Activated T-helper 2 cell treated with anti-CD3 and anti-CD28 coated beads, Interferon-gamma antibody, Interleukin-2, Interleukin-4, amounts not matched to agents 10 μg/mL and 5 μg/mL and 100 μg/mL, durations not matched to agents 14 hours and 24 hours and 36 hours (primary cell): ENCODE measurements at regions of chr1 and their contacts with region 1.

Region 1: DNA sequence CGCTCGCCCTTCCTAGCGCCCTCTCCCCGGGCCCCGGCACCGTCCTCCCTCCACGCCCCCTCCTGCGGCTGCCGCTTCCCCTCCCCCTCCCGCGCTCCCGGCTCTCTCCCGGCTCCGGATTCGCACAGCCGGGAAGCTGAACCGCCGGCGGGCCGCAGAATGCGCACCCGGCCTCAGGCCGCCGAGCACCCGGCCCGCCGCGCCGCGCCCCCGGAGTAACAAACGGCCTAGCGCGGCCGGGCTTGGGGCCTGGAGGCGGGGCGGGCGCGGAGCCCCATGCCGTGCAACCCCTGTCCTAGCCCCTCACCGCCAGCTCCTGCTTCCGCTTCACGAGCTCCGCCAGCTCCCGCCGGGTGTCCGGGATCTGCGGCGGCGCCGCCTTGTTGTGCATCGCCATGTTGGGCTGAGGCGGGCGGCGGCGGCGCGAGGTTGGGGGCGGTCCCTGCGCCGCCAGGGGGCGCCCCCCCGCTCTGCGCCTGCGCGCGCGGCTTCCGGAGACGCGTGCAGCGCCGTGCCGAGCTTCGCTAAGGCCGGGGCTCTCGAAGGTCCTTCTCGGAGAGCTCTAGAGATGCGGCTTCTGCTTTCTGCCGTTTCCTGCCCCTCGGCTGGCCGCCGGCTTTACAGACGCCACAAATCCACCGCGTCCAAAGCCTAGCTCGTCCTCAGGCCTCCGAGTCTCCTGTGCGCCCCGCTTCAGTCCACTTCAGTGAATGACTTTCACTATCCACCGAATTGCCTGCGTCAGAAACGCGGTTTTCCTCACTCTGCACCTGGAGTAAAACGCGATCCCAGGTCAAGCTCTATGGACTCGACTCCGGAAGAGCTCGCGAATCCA is at the start of gene MEAF6:
- DNase-seq: peak; percentile 81
- H3K4me3 Mint-ChIP-seq: peak within 1 kb of the TSS; percentile 93
- H3K27ac Mint-ChIP-seq: peak within 1 kb of the TSS; percentile 95
- H3K4me1 Mint-ChIP-seq: peaks cover 34% of the 10 kb centered on the region
- H3K27me3 Mint-ChIP-seq: no peaks in the 10 kb centered on the region
- total RNA-seq, gene MEAF6: 87.9 and 93.0 TPM in 2 replicates

Region 2: DNA sequence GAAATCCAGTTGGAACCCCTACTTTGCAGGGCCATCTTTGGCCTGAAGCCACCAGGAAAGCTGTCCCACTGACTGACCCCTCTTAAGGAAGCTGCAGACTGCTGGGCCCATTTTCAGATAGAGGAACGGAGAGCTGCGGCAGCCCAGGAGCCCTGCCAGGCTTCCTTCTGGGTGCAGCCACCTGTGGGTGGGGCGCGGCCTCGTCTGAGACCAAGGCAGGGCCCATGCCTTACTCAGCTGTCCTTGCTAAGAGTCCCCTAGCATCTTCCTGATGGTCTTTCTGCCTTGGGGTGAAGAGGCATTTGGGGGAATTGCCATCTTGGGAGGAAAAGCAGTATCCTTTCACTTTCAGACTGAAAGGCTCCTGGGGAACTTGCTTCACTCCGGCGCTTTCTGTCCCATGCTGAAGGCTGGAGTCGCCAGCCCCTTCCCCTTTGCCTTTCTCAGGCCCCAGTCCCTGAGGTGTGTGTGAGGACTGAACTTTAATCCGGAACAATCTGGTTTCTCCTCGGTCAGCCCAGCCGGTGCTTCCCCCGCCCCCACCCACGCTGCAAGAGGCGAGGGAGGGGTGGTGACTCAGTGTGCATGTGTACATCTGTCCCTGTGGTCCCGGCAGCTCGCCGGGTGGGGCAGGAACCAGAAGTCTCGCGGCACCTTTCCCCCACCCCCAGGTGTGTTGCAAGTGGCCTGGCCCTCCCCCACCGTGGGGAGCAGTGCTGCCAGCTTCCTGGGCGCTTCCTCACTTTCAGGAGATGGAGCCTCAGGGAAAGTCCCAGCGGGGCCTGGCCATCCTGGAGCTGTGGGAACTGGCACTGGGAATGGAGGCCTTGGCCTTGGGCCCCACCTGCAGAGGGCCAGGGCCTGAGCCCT is 35.1 kb before region 1 on chr1:
- intact Hi-C with region 1: loop called (anchors 2 kb)
- DNase-seq: peak; percentile 80
- H3K4me3 Mint-ChIP-seq: peak overlapping the region; percentile 96
- H3K27ac Mint-ChIP-seq: peak overlapping the region; percentile 98
- H3K4me1 Mint-ChIP-seq: peaks cover 30% of the 10 kb centered on the region
- H3K27me3 Mint-ChIP-seq: no peaks in the 10 kb centered on the region

Region 3: DNA sequence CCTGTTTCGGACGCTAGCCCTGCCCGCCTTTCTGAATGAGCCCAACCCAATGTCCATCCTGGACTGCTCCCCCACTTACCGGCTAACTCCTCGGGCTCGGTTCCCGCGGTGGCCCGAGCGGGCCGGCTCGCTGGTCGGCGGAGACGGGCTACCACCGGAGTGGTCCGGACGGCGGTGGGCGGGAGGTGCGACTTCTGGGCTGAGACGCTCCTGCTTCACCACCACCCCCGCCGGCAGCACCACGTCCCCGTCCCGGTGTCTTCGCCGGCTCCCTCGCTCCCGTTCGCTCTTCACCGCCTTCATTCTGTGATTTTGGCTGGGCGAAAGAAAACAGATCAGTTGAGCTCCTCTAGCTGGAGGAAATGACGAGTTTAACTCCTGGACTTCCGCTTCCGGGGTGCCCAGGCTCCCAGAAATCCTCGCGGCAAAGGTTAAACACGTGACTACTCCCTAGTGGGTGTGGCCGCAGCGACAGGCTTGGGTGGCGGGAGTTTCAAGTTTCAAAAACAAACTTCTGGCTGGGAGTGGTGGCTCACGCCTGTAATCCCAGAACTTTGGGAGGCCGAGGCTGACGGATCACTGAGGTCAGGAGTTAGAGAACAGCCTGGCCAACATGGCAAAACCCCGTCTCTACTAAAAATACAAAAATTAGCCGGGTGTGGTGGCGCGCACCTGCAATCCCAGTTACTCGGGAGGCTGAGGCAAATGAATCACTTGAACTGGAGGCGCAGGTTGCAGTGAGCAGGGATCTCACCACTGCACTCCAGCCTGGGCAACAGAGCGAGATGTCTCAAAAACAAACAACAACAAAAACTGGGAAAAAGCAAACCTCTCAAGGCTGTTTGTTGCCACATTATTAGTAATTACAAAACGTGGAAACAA is 39.6 kb after region 1 on chr1 and contains the start of gene SNIP1:
- intact Hi-C with region 1: loop called (anchors 5 kb)
- DNase-seq: peak; percentile 89
- H3K4me3 Mint-ChIP-seq: peak within 1 kb of the TSS; percentile 98
- H3K27ac Mint-ChIP-seq: peak within 1 kb of the TSS; percentile 93
- H3K4me1 Mint-ChIP-seq: peaks cover 41% of the 10 kb centered on the region
- H3K27me3 Mint-ChIP-seq: no peaks in the 10 kb centered on the region
- total RNA-seq, gene SNIP1: 26.1 and 27.8 TPM in 2 replicates